ENCODE measurements at regions of chr19 and their contacts with region 1.

Region 1: DNA sequence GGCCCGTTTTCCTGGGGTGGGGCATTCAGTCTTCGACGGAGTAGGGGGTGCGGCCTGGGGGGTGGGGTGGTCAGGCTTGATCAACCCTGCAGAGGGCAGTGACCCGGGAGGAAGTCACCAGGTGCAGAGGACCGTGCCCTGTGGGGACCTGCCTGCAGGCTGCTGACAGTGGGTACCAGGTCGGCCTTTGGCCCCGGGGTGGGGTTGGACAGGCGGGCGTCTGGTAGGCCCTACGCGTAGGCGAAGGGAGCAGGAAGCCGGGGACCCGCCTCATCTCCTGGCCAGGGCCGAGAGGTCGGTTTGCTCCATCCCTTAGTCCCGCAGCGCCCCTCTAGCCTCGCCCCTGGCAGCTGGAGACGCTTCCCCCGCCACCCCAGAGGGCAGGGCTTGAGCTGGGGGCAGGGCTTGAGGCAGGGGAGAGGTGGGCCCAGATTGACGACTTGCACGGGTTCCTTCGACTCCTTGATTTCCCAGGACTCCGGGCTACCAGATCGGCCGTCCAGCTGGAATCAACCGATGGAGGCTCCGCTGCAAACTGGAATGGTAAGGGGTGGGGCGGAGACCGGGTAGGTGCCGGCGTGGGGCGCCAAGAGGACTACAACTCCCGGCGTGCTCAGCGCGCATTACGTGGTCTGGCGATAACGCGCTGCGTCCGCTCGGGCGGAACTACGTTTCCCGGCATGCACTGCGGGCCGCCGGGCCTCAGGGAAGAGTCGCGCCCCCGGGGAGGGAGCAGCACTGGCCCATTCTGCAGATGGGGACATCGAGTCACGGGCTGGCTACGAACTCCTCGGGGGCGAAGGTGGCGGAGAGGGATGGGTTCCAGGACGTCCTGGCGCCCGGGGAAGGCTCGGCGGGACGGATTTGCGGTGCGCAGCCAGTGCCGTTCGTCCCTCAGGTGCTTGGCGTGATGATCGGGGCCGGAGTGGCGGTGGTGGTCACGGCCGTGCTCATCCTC is at the start of gene PNPLA6:
- DNase-seq: peak; percentile 90
- H3K4me3 Mint-ChIP-seq: peak within 1 kb of the TSS; percentile 94
- H3K27ac Mint-ChIP-seq: peak within 1 kb of the TSS; percentile 86
- H3K4me1 Mint-ChIP-seq: peaks cover 18% of the 10 kb centered on the region
- H3K27me3 Mint-ChIP-seq: no peaks in the 10 kb centered on the region
- total RNA-seq, gene PNPLA6: 145 and 147 TPM in 2 replicates

Region 2: GRCh38 chr19:7492142-7492541 is 43.2 kb before region 1 on chr19:
- intact Hi-C with region 1: loop called (anchors 2 kb)
- DNase-seq: peak; percentile 55
- H3K4me3 Mint-ChIP-seq: no peak overlapping the region
- H3K27ac Mint-ChIP-seq: peak overlapping the region; percentile 85
- H3K4me1 Mint-ChIP-seq: peaks cover 26% of the 10 kb centered on the region
- H3K27me3 Mint-ChIP-seq: peaks cover 4% of the 10 kb centered on the region

Region 3: DNA sequence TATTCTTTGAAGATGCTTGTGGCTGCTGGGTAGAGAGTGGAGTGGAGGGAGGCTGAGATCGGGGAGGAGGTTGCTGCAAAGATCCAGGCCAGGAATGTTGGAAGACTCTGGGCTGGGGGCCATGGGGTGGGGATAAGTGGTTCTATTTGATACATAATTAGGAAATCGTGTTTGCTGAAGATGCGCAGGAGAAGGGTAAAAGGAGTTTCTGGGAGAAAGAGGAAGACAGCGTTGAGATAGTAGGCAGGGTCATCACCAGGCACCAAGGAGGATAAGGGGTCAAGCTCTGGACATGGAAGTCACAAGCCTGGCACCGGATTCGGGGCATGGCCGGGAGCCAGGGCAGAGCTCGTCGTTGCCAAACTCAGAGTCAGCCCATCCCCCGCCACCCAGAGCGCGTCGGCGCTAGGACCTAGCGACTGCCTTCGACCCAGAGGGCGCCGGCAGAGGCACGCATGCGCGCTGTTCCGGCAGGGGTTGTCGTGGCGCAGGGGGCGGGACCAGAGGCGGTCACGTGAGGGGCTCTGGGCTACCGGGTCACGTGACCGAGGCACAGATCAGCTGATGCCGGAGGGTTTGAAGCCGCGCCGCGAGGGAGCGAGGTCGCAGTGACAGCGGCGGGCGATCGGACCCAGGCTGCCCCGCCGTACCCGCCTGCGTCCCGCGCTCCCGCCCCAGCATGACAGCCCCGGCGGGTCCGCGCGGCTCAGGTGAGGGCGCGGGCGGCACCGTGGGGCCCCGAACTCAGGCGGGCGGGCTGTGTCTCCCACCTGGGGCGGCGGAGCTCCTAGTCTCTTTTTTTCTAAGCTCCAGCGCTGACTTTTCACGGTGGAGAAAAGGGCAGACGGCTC is 13.0 kb before region 1 on chr19 and contains the start of gene MCOLN1:
- intact Hi-C with region 1: loop called (anchors 1 kb)
- DNase-seq: peak; percentile 99
- H3K4me3 Mint-ChIP-seq: peak within 1 kb of the TSS; percentile 80
- H3K27ac Mint-ChIP-seq: peak within 1 kb of the TSS; percentile 79
- H3K4me1 Mint-ChIP-seq: peaks cover 11% of the 10 kb centered on the region
- H3K27me3 Mint-ChIP-seq: peaks cover 5% of the 10 kb centered on the region
- total RNA-seq, gene MCOLN1: 10.3 and 11.2 TPM in 2 replicates

Region 4: DNA sequence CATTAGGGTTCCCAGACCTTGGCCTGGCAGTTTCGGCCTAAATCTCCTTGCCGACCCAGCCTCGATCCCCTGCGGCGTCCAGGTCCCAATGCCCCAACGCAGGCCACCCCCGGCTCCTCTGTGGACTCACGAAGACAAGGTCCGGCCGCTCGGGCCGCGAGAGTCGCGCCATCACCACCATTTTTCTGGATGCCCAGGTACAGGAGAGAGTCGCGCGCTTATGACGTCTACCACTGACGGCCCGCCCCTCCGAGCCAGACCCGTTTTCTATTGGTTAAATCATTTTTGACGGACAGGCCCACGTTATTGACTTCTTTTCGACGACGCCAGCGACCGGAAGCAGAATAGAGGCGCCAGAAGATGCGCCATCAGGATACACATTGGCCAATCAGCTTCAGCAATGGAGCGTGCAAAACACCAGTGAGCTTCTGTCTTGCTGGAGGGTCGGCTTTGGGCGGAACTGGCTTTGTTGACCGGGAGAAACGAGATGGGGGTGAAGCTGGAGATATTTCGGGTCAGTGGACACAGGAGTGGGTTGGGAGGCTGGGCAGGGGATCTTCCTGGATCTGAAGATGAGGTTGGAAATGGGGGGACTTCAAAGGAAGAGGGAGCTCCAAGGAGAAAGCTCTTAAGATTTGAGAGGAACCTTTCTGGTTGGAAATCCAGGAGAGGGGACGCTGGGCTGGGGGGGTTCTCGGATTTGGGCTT is 94.2 kb after region 1 on chr19 and contains the starts of genes PET100 and XAB2:
- intact Hi-C with region 1: loop called (anchors 1 kb)
- DNase-seq: peak; percentile 94
- H3K4me3 Mint-ChIP-seq: peak within 1 kb of the TSS; percentile 98
- H3K27ac Mint-ChIP-seq: peak within 1 kb of the TSS; percentile 98
- H3K4me1 Mint-ChIP-seq: peaks cover 24% of the 10 kb centered on the region
- H3K27me3 Mint-ChIP-seq: no peaks in the 10 kb centered on the region
- total RNA-seq, gene PET100: 95.7 and 113 TPM in 2 replicates
- total RNA-seq, gene XAB2: 43.0 and 44.3 TPM in 2 replicates

Measured in activated T-helper 2 cell treated with anti-CD3 and anti-CD28 coated beads, Interferon-gamma antibody, Interleukin-2, Interleukin-4, amounts not matched to agents 10 μg/mL and 5 μg/mL and 100 μg/mL, durations not matched to agents 14 hours and 24 hours and 36 hours (primary cell).